Common myeloid progenitor, CD34-positive (primary cell): ENCODE measurements at regions of chrX and their contacts with region 1.

Region 1: GRCh38 chrX:31036895-31037294 is 34.9 kb downstream of the FTHL17 start:
- DNase-seq: peak; percentile 17 to 38 (median 26)
- H3K4me3 ChIP-seq: no peak overlapping the region
- H3K27ac ChIP-seq: no peak overlapping the region
- H3K4me1 ChIP-seq: no peaks in the 10 kb centered on the region
- H3K27me3 ChIP-seq: no peaks in the 10 kb centered on the region

Region 2: GRCh38 chrX:31024866-31025265 is 12.0 kb before region 1 on chrX:
- CTCF ChIA-PET with region 1: interaction called, 11 read pairs
- POLR2A ChIA-PET with region 1: no interaction called
- DNase-seq: no peak
- H3K4me3 ChIP-seq: no peak overlapping the region
- H3K27ac ChIP-seq: no peak overlapping the region
- H3K4me1 ChIP-seq: peaks cover 0 to 5% (median 0%) of the 10 kb centered on the region in 4 experiments
- H3K27me3 ChIP-seq: peaks cover 0 to 3% (median 0%) of the 10 kb centered on the region in 5 experiments

Region 3: DNA sequence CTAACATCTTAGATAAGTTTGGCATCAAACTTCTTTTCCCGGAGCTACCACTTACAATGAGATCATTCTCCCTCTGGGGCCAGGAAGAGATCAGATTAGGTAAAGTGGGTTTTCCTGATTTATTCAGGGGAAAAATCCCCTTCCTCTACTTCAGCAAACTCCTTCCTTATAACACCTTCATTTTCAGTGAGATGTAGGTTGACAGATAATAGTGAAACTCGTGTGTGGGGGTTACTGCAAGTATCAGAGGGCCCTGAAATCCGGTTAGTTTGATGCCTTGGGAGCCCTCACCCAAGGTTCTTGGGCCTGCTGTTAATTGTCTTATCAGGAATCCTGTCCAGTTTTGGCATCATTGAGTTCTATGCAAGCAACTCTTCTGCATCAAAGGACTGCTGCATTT is 24.2 kb after region 1 on chrX:
- CTCF ChIA-PET with region 1: no interaction called
- POLR2A ChIA-PET with region 1: no interaction called
- DNase-seq: no peak
- H3K4me3 ChIP-seq: no peak overlapping the region
- H3K27ac ChIP-seq: no peak overlapping the region
- H3K4me1 ChIP-seq: no peaks in the 10 kb centered on the region
- H3K27me3 ChIP-seq: no peaks in the 10 kb centered on the region

Region 4: DNA sequence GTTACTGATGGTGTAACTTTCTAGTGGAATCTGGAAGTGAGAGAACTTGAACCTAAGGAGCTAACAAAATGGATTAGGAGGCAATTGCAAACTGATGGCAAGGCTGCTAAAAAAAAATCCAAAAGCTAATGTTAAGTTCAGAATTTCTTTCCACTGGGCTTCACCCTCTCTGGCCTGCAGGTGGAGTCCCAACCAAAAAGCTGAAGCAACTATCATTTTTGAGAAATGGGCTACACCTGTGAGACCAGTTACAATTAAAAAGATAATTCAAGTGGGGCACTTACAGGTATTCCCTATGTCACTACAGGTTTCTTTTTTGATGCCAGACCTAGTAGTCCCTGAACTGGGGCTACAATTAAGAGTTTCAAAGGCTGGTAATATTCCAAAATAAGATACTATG is 177.0 kb after region 1 on chrX:
- CTCF ChIA-PET with region 1: interaction called, 13 read pairs
- POLR2A ChIA-PET with region 1: no interaction called
- DNase-seq: peak in 2 of 3 donors; percentile 27 to 35
- H3K4me3 ChIP-seq: no peak overlapping the region
- H3K27ac ChIP-seq: no peak overlapping the region
- H3K4me1 ChIP-seq: peaks cover 0 to 7% (median 1%) of the 10 kb centered on the region in 4 experiments
- H3K27me3 ChIP-seq: peaks cover 0 to under 1% (median 0%) of the 10 kb centered on the region in 5 experiments

Region 5: DNA sequence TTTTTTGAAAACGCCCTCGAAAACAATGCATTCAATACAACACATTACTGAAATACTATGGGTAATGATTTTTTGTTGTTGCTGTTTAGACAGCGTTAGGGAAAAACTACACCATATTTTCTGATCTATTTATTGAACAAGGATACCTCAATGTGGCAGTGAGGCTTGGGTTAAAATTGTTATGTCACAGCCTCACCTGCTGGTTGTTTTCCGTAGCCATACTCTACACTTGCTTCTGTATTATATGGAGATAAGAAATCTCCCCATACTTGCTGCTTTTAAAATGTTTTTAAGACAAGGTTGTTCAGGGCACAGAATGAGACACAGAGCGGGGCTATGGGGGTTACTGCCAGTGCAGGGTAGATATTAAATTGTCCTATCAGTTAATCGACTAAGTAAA is 256.5 kb after region 1 on chrX:
- CTCF ChIA-PET with region 1: interaction called, 31 read pairs
- POLR2A ChIA-PET with region 1: no interaction called
- DNase-seq: peak; percentile 22 to 31 (median 29)
- H3K4me3 ChIP-seq: no peak overlapping the region
- H3K27ac ChIP-seq: no peak overlapping the region
- H3K4me1 ChIP-seq: no peaks in the 10 kb centered on the region
- H3K27me3 ChIP-seq: no peaks in the 10 kb centered on the region

Region 6: GRCh38 chrX:31423609-31424189 is 386.8 kb after region 1 on chrX:
- CTCF ChIA-PET with region 1: interaction called, 27 read pairs
- POLR2A ChIA-PET with region 1: interaction called, 3 read pairs
- DNase-seq: peak; percentile 34 to 63 (median 53)
- H3K4me3 ChIP-seq: no peak overlapping the region
- H3K27ac ChIP-seq: no peak overlapping the region
- H3K4me1 ChIP-seq: no peaks in the 10 kb centered on the region
- H3K27me3 ChIP-seq: peaks cover 0 to 3% (median 0%) of the 10 kb centered on the region in 5 experiments

Region 7: DNA sequence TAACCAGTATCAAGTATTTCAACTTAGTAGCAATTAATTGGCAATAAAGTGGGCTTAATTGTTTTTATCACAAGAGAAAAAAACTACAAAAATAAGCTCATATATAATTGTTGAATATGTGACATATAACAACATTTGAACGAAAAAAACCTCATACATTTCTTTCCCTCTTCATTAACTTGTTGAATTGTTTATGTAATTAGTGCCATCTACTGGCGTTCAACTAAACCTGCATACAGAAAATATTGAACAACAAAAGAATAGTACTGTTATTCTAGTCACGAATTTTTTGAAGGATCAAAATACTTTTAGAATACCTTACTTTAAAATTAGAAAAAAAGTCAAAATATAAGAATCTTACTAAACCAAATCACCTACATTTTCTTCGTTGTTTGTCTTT is 621.5 kb after region 1 on chrX:
- CTCF ChIA-PET with region 1: interaction called, 19 read pairs
- POLR2A ChIA-PET with region 1: no interaction called
- DNase-seq: peak; percentile 4 to 30 (median 27)
- H3K4me3 ChIP-seq: no peak overlapping the region
- H3K27ac ChIP-seq: no peak overlapping the region
- H3K4me1 ChIP-seq: no peaks in the 10 kb centered on the region
- H3K27me3 ChIP-seq: peaks cover 0 to 3% (median 0%) of the 10 kb centered on the region in 5 experiments